ENCODE measurements at regions of chr7 and their contacts with region 1.

Region 1: GRCh38 chr7:3092468-3092867 is 48.8 kb upstream of the CARD11 start:
- DNase-seq: peak; percentile 45 to 92 (median 65)
- ATAC-seq: peak; percentile 78
- H3K4me3 ChIP-seq: peak overlapping the region; percentile 8
- H3K4me3 Mint-ChIP-seq: peak overlapping the region; percentile 75
- H3K27ac ChIP-seq: peak overlapping the region; percentile 78 to 83
- H3K27ac Mint-ChIP-seq: peak overlapping the region; percentile 97
- H3K4me1 ChIP-seq: peaks cover 72% of the 10 kb centered on the region
- H3K4me1 Mint-ChIP-seq: peaks cover 67% of the 10 kb centered on the region
- H3K27me3 ChIP-seq: no peaks in the 10 kb centered on the region
- H3K27me3 Mint-ChIP-seq: no peaks in the 10 kb centered on the region
- CTCF ChIP-seq: no peak

Region 2: GRCh38 chr7:3042861-3043489 is 49.5 kb before region 1 on chr7:
- CTCF ChIA-PET with region 1: interaction called, 4 read pairs
- POLR2A ChIA-PET with region 1: interaction called, 8 read pairs
- intact Hi-C with region 1: loop called (anchors 5 to 10 kb)
- DNase-seq: peak; percentile 23 to 86 (median 66)
- ATAC-seq: peak; percentile 75
- H3K4me3 ChIP-seq: peak overlapping the region; percentile 89
- H3K4me3 Mint-ChIP-seq: peak overlapping the region; percentile 93
- H3K27ac ChIP-seq: peak overlapping the region; percentile 74 to 99
- H3K27ac Mint-ChIP-seq: peak overlapping the region; percentile 85
- H3K4me1 ChIP-seq: peaks cover 60% of the 10 kb centered on the region
- H3K4me1 Mint-ChIP-seq: peaks cover 70% of the 10 kb centered on the region
- H3K27me3 ChIP-seq: no peaks in the 10 kb centered on the region
- H3K27me3 Mint-ChIP-seq: no peaks in the 10 kb centered on the region
- CTCF ChIP-seq: no peak

Region 3: GRCh38 chr7:3244241-3244814 is 151.9 kb after region 1 on chr7:
- CTCF ChIA-PET with region 1: no interaction called
- POLR2A ChIA-PET with region 1: no interaction called
- intact Hi-C with region 1: no loop called
- DNase-seq: no peak
- ATAC-seq: no peak
- H3K4me3 ChIP-seq: no peak overlapping the region
- H3K4me3 Mint-ChIP-seq: no peak overlapping the region
- H3K27ac ChIP-seq: no peak overlapping the region
- H3K27ac Mint-ChIP-seq: no peak overlapping the region
- H3K4me1 ChIP-seq: no peaks in the 10 kb centered on the region
- H3K4me1 Mint-ChIP-seq: no peaks in the 10 kb centered on the region
- H3K27me3 ChIP-seq: no peaks in the 10 kb centered on the region
- H3K27me3 Mint-ChIP-seq: peaks cover 4% of the 10 kb centered on the region
- CTCF ChIP-seq: no peak